ENCODE measurements at regions of chr16 and their contacts with region 1.

Region 1: GRCh38 chr16:68704232-68704867 is 32.7 kb upstream of the CDH1 start:
- DNase-seq: peak; percentile 51
- H3K4me3 Mint-ChIP-seq: no peak overlapping the region
- H3K27ac Mint-ChIP-seq: no peak overlapping the region
- H3K4me1 Mint-ChIP-seq: no peaks in the 10 kb centered on the region
- H3K27me3 Mint-ChIP-seq: peaks cover 4% of the 10 kb centered on the region

Region 2: GRCh38 chr16:68351962-68352431 is 352.4 kb before region 1 on chr16:
- intact Hi-C with region 1: no loop called
- DNase-seq: no peak
- H3K4me3 Mint-ChIP-seq: no peak overlapping the region
- H3K27ac Mint-ChIP-seq: no peak overlapping the region
- H3K4me1 Mint-ChIP-seq: peaks cover 21% of the 10 kb centered on the region
- H3K27me3 Mint-ChIP-seq: peaks cover 2% of the 10 kb centered on the region

Region 3: DNA sequence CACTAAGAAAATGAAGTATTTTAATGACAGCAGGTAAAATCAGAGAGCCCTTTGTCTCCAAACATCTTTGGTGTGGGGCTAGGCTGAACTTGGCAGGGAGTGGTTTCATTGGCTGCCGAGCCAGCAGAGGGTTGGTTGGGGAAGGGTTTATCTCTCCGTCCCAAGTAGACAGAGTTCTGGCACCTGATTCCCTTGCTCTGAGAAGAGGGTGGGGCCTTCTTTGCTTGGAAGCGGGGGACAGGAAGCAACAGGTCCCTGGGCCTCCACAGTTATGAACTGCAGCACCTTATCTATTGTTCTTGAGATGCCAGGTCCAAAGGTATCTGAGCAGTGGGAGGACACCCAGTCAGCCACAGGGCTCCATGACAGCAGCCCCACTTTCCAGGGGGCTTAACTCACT is 20.4 kb after region 1 on chr16:
- intact Hi-C with region 1: no loop called
- DNase-seq: no peak
- H3K4me3 Mint-ChIP-seq: no peak overlapping the region
- H3K27ac Mint-ChIP-seq: no peak overlapping the region
- H3K4me1 Mint-ChIP-seq: peaks cover 6% of the 10 kb centered on the region
- H3K27me3 Mint-ChIP-seq: peaks cover 10% of the 10 kb centered on the region

Region 4: GRCh38 chr16:68756250-68756915 is 52.0 kb after region 1 on chr16:
- intact Hi-C with region 1: no loop called
- DNase-seq: peak; percentile 55
- H3K4me3 Mint-ChIP-seq: peak overlapping the region; percentile 9
- H3K27ac Mint-ChIP-seq: peak overlapping the region; percentile 89
- H3K4me1 Mint-ChIP-seq: peaks cover 63% of the 10 kb centered on the region
- H3K27me3 Mint-ChIP-seq: no peaks in the 10 kb centered on the region

Region 5: GRCh38 chr16:68800257-68800875 is 96.0 kb after region 1 on chr16:
- intact Hi-C with region 1: loop called (anchors 1 kb)
- DNase-seq: peak; percentile 34
- H3K4me3 Mint-ChIP-seq: no peak overlapping the region
- H3K27ac Mint-ChIP-seq: no peak overlapping the region
- H3K4me1 Mint-ChIP-seq: peaks cover 2% of the 10 kb centered on the region
- H3K27me3 Mint-ChIP-seq: peaks cover 9% of the 10 kb centered on the region

Region 6: GRCh38 chr16:69123910-69124309 is 419.6 kb after region 1 on chr16:
- intact Hi-C with region 1: loop called (anchors 10 kb)
- DNase-seq: peak; percentile 49
- H3K4me3 Mint-ChIP-seq: no peak overlapping the region
- H3K27ac Mint-ChIP-seq: no peak overlapping the region
- H3K4me1 Mint-ChIP-seq: peaks cover 6% of the 10 kb centered on the region
- H3K27me3 Mint-ChIP-seq: no peaks in the 10 kb centered on the region

Measured in activated T-helper 2 cell treated with anti-CD3 and anti-CD28 coated beads, Interferon-gamma antibody, Interleukin-2, Interleukin-4, amounts not matched to agents 10 μg/mL and 5 μg/mL and 100 μg/mL, durations not matched to agents 14 hours and 24 hours and 36 hours (primary cell).